MCF 10A (cell line): ENCODE measurements at regions of chr21 and their contacts with region 1.

Region 1: DNA sequence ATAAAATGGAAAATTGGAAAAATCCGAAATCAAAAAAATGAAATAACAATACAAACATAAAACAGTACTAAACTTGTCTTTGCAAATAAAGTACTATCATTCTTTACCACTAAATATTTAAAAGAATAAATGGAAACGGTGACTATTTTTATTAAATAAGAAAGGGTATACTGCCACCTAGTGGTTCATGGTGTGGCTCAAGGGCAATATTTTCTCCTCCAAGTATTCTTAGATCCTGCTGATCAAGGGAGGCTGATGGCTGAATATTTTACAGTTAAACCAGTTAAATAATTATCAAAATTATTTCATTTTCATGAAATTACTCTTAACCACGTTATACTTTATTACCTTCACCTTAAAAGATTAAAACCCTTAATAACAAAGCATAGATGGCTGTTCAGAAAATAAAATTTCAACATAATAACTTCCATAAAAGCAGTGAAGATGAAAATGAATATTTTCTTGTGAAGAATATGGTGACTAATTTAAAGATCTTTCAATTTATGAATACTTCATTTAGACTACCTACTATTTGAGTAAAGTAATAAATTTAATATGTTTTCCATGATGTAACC is 1793.9 kb downstream of the NCAM2 start:
- DNase-seq: peak; percentile 60
- H3K4me3 Mint-ChIP-seq: no peak overlapping the region
- H3K27ac Mint-ChIP-seq: no peak overlapping the region
- H3K4me1 Mint-ChIP-seq: no peaks in the 10 kb centered on the region
- H3K27me3 Mint-ChIP-seq: no peaks in the 10 kb centered on the region
- CTCF ChIP-seq: peak; percentile 61

Region 2: GRCh38 chr21:20999659-21000058 is 1792.4 kb before region 1 on chr21:
- CTCF ChIA-PET with region 1: interaction called, 3 read pairs
- POLR2A ChIA-PET with region 1: no interaction called
- intact Hi-C with region 1: loop called (anchors 5 kb)
- DNase-seq: peak; percentile 48
- H3K4me3 Mint-ChIP-seq: no peak overlapping the region
- H3K27ac Mint-ChIP-seq: no peak overlapping the region
- H3K4me1 Mint-ChIP-seq: peaks cover 5% of the 10 kb centered on the region
- H3K27me3 Mint-ChIP-seq: no peaks in the 10 kb centered on the region
- CTCF ChIP-seq: peak; percentile 69

Region 3: DNA sequence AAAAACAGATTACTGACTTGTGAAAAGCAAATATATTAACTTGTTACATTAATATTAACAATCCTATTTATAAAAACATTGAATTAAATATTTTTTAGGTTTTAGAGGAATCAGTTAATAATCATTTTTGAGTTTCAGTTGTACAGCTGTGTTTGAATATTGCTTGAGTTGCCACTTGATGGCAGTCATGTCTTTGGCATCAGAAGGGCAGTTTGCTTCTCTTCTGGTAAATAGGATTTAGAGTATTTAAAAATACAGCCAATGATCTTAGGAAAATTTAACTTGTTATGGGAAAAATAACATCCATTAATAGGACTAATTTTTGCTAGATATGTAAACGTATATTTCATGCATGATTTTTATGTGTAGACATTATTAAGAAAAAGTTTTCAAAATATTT is 1559.8 kb before region 1 on chr21:
- CTCF ChIA-PET with region 1: interaction called, 4 read pairs
- POLR2A ChIA-PET with region 1: no interaction called
- intact Hi-C with region 1: loop called (anchors 1 kb)
- DNase-seq: peak; percentile 53
- H3K4me3 Mint-ChIP-seq: no peak overlapping the region
- H3K27ac Mint-ChIP-seq: no peak overlapping the region
- H3K4me1 Mint-ChIP-seq: no peaks in the 10 kb centered on the region
- H3K27me3 Mint-ChIP-seq: no peaks in the 10 kb centered on the region
- CTCF ChIP-seq: peak; percentile 57

Region 4: DNA sequence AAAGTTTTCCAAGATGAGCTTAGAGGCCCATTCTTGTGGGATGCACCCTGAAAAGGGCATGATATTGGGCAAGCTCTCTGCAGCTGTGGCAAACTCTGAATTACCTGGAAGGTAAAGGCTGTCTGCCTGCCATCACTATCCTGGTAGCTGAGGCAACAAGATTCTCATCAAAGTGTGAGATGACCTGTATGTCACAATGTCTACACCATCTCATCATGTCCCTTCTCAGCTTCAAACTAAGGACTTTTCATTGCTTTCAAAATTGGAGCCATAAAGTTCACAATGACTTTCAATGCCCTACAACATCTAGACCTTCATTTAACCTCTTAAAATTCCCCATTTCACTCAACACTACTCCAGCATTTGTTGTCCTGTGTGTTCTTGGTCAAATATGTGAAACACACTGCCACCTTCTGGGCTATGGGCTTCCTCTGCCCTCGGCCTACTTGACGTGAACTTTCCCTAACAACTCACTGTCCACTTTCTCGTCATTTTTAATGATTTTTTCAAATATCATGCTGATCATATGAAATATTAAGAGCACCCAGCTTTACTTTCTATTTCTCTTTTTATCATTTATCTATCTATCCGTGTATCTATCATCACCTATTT is 224.4 kb after region 1 on chr21:
- CTCF ChIA-PET with region 1: interaction called, 3 read pairs
- POLR2A ChIA-PET with region 1: no interaction called
- intact Hi-C with region 1: loop called (anchors 10 kb)
- DNase-seq: peak; percentile 33
- H3K4me3 Mint-ChIP-seq: no peak overlapping the region
- H3K27ac Mint-ChIP-seq: no peak overlapping the region
- H3K4me1 Mint-ChIP-seq: peaks cover 9% of the 10 kb centered on the region
- H3K27me3 Mint-ChIP-seq: no peaks in the 10 kb centered on the region
- CTCF ChIP-seq: peak; percentile 33

Region 5: DNA sequence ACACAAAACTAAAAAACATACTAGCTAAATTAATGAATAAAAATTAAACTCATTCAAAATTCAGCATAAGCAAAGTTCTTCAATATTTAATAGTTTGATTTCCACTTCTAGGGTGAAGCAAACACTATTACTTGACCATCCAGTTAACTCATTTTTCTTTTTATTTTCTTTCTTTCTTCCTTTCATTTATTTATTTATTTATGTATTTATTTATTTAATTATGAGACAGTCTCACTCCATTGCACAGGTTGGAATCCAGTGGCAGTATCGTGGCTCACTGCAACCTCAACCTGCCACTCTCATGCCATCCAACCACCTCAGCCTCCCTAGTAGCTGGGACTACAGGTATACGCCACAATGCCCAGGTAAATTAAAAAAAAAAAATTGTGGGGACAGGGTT is 275.6 kb after region 1 on chr21:
- CTCF ChIA-PET with region 1: no interaction called
- POLR2A ChIA-PET with region 1: no interaction called
- intact Hi-C with region 1: no loop called
- DNase-seq: no peak
- H3K4me3 Mint-ChIP-seq: no peak overlapping the region
- H3K27ac Mint-ChIP-seq: no peak overlapping the region
- H3K4me1 Mint-ChIP-seq: peaks cover 1% of the 10 kb centered on the region
- H3K27me3 Mint-ChIP-seq: no peaks in the 10 kb centered on the region
- CTCF ChIP-seq: no peak

Region 6: DNA sequence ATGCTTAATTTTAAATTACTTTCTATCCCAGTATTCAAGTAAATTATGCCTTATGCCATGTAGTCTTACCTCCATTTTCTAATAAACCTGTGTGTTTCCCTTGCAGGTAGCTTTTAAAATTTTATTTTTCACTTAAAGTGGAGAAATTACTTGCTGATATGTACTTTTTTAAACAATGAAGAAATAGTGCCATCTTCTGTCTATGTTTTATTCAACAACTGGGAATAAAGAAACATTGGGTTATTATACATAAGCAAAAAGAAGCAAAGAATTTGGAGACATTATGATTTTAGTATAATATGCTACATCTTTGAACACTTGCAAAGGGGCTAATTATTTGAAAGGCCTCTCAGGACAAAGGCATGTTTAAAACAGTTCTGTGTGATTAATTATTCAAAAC is 902.3 kb after region 1 on chr21:
- CTCF ChIA-PET with region 1: no interaction called
- POLR2A ChIA-PET with region 1: no interaction called
- intact Hi-C with region 1: loop called (anchors 10 kb)
- DNase-seq: peak; percentile 3
- H3K4me3 Mint-ChIP-seq: no peak overlapping the region
- H3K27ac Mint-ChIP-seq: no peak overlapping the region
- H3K4me1 Mint-ChIP-seq: no peaks in the 10 kb centered on the region
- H3K27me3 Mint-ChIP-seq: no peaks in the 10 kb centered on the region
- CTCF ChIP-seq: peak; percentile 22